Natural killer cell (primary cell): ENCODE measurements at regions of chr5 and their contacts with region 1.

Region 1: DNA sequence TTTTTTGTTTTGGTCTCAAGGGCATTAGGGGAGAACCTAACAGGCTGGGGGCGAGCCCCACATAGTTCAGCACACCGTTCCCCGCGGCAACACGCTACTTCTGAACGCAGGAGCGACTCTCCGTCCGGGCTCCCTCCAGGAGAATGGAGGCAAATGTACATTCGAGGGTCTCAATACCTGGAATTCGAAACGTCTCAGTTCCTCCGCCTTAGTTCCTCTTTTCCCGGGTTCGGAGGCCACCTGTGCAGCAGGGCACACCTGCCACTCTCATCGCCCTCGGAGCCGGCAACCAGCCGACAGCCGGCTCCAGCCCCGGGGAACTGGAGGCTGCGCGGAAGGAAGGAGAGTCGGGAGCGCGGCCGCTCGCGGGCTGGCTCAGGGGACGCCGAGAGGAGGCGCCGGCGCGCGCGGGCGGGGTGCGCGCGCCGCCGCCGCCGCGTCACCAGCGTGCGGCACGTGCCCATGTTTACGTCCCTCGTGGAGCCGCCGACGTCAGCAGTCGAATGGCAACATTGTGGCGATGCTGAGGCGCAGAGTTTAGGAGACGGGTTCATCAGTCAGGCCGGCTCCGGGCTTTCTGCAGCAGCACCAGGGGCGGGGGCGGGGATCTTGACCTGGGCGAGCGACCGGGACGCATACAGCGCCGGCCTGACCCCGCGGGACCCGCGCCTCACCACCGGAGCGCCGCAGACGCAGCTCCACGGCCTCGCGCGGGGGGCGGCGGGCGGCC is at the start of gene JMY:
- DNase-seq: peak; percentile 82 to 94
- ATAC-seq: peak; percentile 84 to 92 (median 89)
- H3K4me3 ChIP-seq: peak within 1 kb of the TSS; percentile 66
- H3K4me3 Mint-ChIP-seq: peak within 1 kb of the TSS; percentile 92
- H3K27ac ChIP-seq: peak within 1 kb of the TSS; percentile 83
- H3K27ac Mint-ChIP-seq: peak within 1 kb of the TSS; percentile 89 to 90
- H3K4me1 ChIP-seq: peaks cover 31% of the 10 kb centered on the region
- H3K4me1 Mint-ChIP-seq: peaks cover 26 to 27% of the 10 kb centered on the region in 2 donors
- H3K27me3 ChIP-seq: no peaks in the 10 kb centered on the region
- H3K27me3 Mint-ChIP-seq: no peaks in the 10 kb centered on the region
- CTCF ChIP-seq: peak; percentile 35
- total RNA-seq, gene JMY: 27.6 to 30.4 (median 28.7) TPM

Region 2: GRCh38 chr5:78984439-78985115 is 251.2 kb before region 1 on chr5:
- intact Hi-C with region 1: loop called (anchors 5 kb)
- DNase-seq: peak; percentile 76 to 88
- ATAC-seq: peak; percentile 70 to 79 (median 76)
- H3K4me3 ChIP-seq: peak overlapping the region; percentile 68
- H3K4me3 Mint-ChIP-seq: peak overlapping the region; percentile 92
- H3K27ac ChIP-seq: peak overlapping the region; percentile 85
- H3K27ac Mint-ChIP-seq: peak overlapping the region; percentile 94 to 95
- H3K4me1 ChIP-seq: peaks cover 13% of the 10 kb centered on the region
- H3K4me1 Mint-ChIP-seq: peaks cover 25% of the 10 kb centered on the region in 2 donors
- H3K27me3 ChIP-seq: no peaks in the 10 kb centered on the region
- H3K27me3 Mint-ChIP-seq: no peaks in the 10 kb centered on the region
- CTCF ChIP-seq: no peak

Region 3: DNA sequence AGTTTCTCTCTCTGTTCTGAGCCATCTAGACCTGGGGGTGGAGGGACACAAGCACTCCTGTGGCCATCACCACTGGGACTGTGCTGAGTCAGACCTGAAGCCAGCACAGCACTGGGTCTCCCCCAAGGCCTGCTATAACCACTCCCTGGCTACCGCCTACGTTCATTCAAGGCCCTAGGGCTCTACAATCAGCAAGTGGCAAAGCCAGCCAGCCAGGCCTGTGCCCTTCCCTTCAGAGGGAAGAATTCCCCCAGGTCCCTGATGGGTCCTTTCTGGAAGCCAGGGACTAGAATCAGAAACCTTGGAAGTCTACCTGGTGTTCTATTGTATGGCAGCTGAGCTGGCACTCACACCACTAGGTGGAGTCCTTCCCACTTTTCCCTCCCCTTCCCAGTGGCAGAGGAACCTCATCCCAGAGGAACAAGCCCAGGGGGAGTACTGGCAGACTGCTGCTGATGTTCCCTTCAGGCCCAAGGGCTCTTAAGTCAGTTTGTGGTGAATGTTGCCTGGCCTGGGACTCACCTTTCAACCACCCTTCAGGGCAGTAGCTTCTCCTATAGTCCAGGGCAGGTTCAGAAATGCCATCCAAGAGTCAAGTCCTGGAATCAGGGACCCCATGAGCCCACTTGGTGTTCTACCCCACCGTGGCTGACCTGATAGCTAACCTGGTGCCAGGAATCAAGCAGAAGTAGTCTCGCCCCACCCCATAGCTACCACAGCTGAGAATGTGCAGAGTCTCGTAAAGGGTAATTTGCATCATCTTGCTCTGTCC is 20.2 kb after region 1 on chr5:
- intact Hi-C with region 1: no loop called
- DNase-seq: no peak
- ATAC-seq: peak in 1 of 3 donors; percentile 28
- H3K4me3 ChIP-seq: no peak overlapping the region
- H3K4me3 Mint-ChIP-seq: no peak overlapping the region
- H3K27ac ChIP-seq: no peak overlapping the region
- H3K27ac Mint-ChIP-seq: no peak overlapping the region
- H3K4me1 ChIP-seq: peaks cover 12% of the 10 kb centered on the region
- H3K4me1 Mint-ChIP-seq: peaks cover 49 to 55% of the 10 kb centered on the region in 2 donors
- H3K27me3 ChIP-seq: no peaks in the 10 kb centered on the region
- H3K27me3 Mint-ChIP-seq: no peaks in the 10 kb centered on the region
- CTCF ChIP-seq: no peak

Region 4: DNA sequence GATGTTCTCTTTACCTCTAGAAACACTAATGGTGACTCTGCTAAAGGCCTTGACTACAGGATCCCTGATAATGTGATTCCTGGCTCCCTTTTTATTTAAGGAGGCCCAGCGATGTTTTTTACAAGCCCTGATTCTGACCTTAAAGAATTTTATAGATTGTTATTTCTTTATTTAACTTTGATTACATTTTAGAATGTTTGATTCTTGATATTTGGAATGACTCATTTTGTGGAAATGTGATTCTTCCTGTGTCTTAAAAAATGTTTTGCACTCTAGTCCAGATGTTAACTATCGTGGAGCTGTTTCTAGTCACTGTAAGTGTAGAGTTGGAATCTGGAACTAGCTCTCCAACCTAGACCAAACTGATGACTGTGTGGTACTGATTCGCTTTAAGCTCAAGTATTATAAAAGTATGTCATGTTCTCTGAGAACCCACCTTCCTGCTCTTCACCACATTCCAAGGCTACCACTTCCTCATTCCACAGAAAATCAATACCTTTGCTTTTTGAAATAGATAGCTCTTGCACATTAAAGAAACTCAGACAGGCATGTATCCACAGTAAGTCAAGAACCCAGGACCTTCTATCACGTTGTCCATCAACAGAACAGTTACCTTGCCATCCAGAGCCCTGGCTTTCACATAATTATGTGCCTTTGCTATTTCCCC is 65.4 kb after region 1 on chr5:
- intact Hi-C with region 1: loop called (anchors 5 kb)
- DNase-seq: no peak
- ATAC-seq: no peak
- H3K4me3 ChIP-seq: no peak overlapping the region
- H3K4me3 Mint-ChIP-seq: no peak overlapping the region
- H3K27ac ChIP-seq: no peak overlapping the region
- H3K27ac Mint-ChIP-seq: no peak overlapping the region
- H3K4me1 ChIP-seq: no peaks in the 10 kb centered on the region
- H3K4me1 Mint-ChIP-seq: peaks cover 0 to 10% of the 10 kb centered on the region in 2 donors
- H3K27me3 ChIP-seq: no peaks in the 10 kb centered on the region
- H3K27me3 Mint-ChIP-seq: no peaks in the 10 kb centered on the region
- CTCF ChIP-seq: no peak

Region 5: GRCh38 chr5:79514391-79515105 is 278.7 kb after region 1 on chr5:
- intact Hi-C with region 1: loop called (anchors 10 kb)
- DNase-seq: peak; percentile 90 to 98
- ATAC-seq: peak; percentile 78 to 90 (median 82)
- H3K4me3 ChIP-seq: peak overlapping the region; percentile 88
- H3K4me3 Mint-ChIP-seq: peak overlapping the region; percentile 100
- H3K27ac ChIP-seq: peak overlapping the region; percentile 98
- H3K27ac Mint-ChIP-seq: peak overlapping the region; percentile 97 to 99
- H3K4me1 ChIP-seq: peaks cover 15% of the 10 kb centered on the region
- H3K4me1 Mint-ChIP-seq: peaks cover 23 to 25% of the 10 kb centered on the region in 2 donors
- H3K27me3 ChIP-seq: peaks cover 27% of the 10 kb centered on the region
- H3K27me3 Mint-ChIP-seq: peaks cover 24 to 32% of the 10 kb centered on the region in 2 donors
- CTCF ChIP-seq: no peak

Region 6: GRCh38 chr5:80407735-80408482 is 1172.1 kb after region 1 on chr5 and contains the start of gene ZFYVE16:
- intact Hi-C with region 1: loop called (anchors 5 kb)
- DNase-seq: peak; percentile 96 to 99
- ATAC-seq: peak; percentile 90 to 96 (median 91)
- H3K4me3 ChIP-seq: peak within 1 kb of the TSS; percentile 75
- H3K4me3 Mint-ChIP-seq: peak within 1 kb of the TSS; percentile 92
- H3K27ac ChIP-seq: peak within 1 kb of the TSS; percentile 97
- H3K27ac Mint-ChIP-seq: peak within 1 kb of the TSS; percentile 98 to 99
- H3K4me1 ChIP-seq: peaks cover 11% of the 10 kb centered on the region
- H3K4me1 Mint-ChIP-seq: peaks cover 24 to 31% of the 10 kb centered on the region in 2 donors
- H3K27me3 ChIP-seq: no peaks in the 10 kb centered on the region
- H3K27me3 Mint-ChIP-seq: no peaks in the 10 kb centered on the region
- CTCF ChIP-seq: no peak
- total RNA-seq, gene ZFYVE16: 24.4 to 36.6 (median 30.1) TPM